ENCODE measurements at regions of chr5 and their contacts with region 1.

Region 1: DNA sequence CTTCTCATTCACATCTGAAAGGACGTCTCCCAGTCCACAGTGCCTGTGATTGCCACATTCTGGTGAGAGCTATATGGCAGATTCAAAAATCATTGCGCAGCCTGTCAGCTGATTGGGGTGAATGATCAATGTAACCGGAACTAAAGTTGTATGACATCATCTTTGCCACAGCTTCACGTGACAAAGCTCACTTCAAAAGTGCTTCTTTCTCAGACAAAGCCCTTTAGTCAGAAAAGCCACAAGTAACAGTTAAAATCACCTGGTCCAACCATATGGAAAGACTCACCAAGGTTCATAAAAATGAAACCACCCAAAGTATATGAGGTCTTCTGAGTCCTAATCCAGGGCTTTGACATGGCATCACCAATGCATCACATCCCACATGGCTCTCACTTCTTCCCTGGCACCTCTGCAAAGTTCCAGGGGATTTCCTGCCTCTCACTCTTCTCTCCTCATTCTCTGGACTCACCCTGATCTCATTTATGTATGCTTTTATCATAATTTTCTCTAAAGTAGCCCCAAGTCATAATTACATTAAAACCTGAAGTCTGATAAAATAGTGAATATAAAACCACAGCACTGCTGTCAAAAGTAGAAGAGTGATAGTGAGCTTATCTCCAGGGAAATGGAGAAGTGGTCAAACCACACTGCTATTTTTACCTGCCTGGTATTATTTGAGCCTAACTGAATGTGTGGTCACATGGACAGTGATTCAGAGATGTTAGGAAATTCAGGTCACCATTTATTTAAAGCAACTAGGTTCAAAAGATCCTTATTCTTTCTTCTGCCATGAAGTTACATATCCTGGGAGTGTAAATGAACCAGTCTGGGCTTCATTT is 193.1 kb upstream of the PTGER4 start:
- DNase-seq: peak in 8 of 9 donors; percentile 31 to 76 (median 56)
- ATAC-seq: peak; percentile 81
- H3K4me3 ChIP-seq: no peak overlapping the region
- H3K4me3 Mint-ChIP-seq: peak overlapping the region in 4 of 10 donors; percentile 2 to 52 (median 48)
- H3K27ac ChIP-seq: no peak overlapping the region
- H3K27ac Mint-ChIP-seq: peak overlapping the region in 8 of 9 donors; percentile 5 to 87 (median 59)
- H3K4me1 ChIP-seq: peaks cover 6 to 12% of the 10 kb centered on the region in 2 donors
- H3K4me1 Mint-ChIP-seq: peaks cover 6 to 69% (median 30%) of the 10 kb centered on the region in 7 donors
- H3K27me3 ChIP-seq: no peaks in the 10 kb centered on the region
- H3K27me3 Mint-ChIP-seq: no peaks in the 10 kb centered on the region

Region 2: GRCh38 chr5:40223884-40224402 is 262.7 kb before region 1 on chr5:
- CTCF ChIA-PET with region 1: no interaction called
- POLR2A ChIA-PET with region 1: no interaction called
- intact Hi-C with region 1: loop called in 1 of 2 experiments (anchors 5 kb)
- DNase-seq: peak in 1 of 9 donors; percentile 34
- ATAC-seq: peak; percentile 40
- H3K4me3 ChIP-seq: no peak overlapping the region
- H3K4me3 Mint-ChIP-seq: peak overlapping the region in 1 of 10 donors; percentile 70
- H3K27ac ChIP-seq: no peak overlapping the region
- H3K27ac Mint-ChIP-seq: peak overlapping the region in 1 of 9 donors; percentile 79
- H3K4me1 ChIP-seq: peaks cover 0 to 4% of the 10 kb centered on the region in 2 donors
- H3K4me1 Mint-ChIP-seq: peaks cover 0 to 36% (median 6%) of the 10 kb centered on the region in 7 donors
- H3K27me3 ChIP-seq: no peaks in the 10 kb centered on the region
- H3K27me3 Mint-ChIP-seq: peaks cover 0 to 5% (median 0%) of the 10 kb centered on the region in 5 donors

Region 3: GRCh38 chr5:40277161-40277906 is 209.3 kb before region 1 on chr5:
- CTCF ChIA-PET with region 1: no interaction called
- POLR2A ChIA-PET with region 1: no interaction called
- intact Hi-C with region 1: loop called in 1 of 2 experiments (anchors 2 kb)
- DNase-seq: peak in 2 of 9 donors; percentile 6 to 34
- ATAC-seq: peak; percentile 72
- H3K4me3 ChIP-seq: no peak overlapping the region
- H3K4me3 Mint-ChIP-seq: peak overlapping the region in 9 of 10 donors; percentile 7 to 72 (median 42)
- H3K27ac ChIP-seq: peak overlapping the region; percentile 45
- H3K27ac Mint-ChIP-seq: peak overlapping the region; percentile 66 to 88 (median 76)
- H3K4me1 ChIP-seq: peaks cover 9 to 16% of the 10 kb centered on the region in 2 donors
- H3K4me1 Mint-ChIP-seq: peaks cover 18 to 39% (median 33%) of the 10 kb centered on the region in 7 donors
- H3K27me3 ChIP-seq: no peaks in the 10 kb centered on the region
- H3K27me3 Mint-ChIP-seq: no peaks in the 10 kb centered on the region

Region 4: DNA sequence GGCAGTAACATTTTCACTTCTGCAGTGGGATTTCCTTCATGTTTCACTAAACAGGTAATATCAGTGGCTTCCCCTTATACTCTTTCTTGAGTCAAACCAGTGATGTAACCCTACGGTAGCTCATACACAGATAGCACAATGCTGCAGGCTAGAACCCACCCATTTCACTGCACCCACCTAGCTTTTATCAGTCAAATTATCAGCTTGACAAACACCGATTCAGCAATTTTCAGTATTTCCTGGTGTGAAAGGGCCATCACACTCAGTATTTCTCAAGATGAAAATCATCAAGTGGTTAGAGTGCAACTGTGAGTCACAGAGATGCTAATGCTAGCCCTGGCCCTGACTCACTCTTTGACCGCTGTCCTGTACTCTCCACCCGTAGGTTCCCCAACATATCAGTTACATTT is 49.2 kb before region 1 on chr5:
- CTCF ChIA-PET with region 1: no interaction called
- POLR2A ChIA-PET with region 1: no interaction called
- intact Hi-C with region 1: loop called (anchors 1 to 5 kb)
- DNase-seq: peak in 1 of 9 donors; percentile 7
- ATAC-seq: peak; percentile 67
- H3K4me3 ChIP-seq: peak overlapping the region; percentile 24
- H3K4me3 Mint-ChIP-seq: peak overlapping the region in 6 of 10 donors; percentile 10 to 75 (median 38)
- H3K27ac ChIP-seq: peak overlapping the region; percentile 79
- H3K27ac Mint-ChIP-seq: peak overlapping the region; percentile 71 to 96 (median 91)
- H3K4me1 ChIP-seq: peaks cover 34 to 39% of the 10 kb centered on the region in 2 donors
- H3K4me1 Mint-ChIP-seq: peaks cover 23 to 82% (median 68%) of the 10 kb centered on the region in 7 donors
- H3K27me3 ChIP-seq: no peaks in the 10 kb centered on the region
- H3K27me3 Mint-ChIP-seq: no peaks in the 10 kb centered on the region

Region 5: DNA sequence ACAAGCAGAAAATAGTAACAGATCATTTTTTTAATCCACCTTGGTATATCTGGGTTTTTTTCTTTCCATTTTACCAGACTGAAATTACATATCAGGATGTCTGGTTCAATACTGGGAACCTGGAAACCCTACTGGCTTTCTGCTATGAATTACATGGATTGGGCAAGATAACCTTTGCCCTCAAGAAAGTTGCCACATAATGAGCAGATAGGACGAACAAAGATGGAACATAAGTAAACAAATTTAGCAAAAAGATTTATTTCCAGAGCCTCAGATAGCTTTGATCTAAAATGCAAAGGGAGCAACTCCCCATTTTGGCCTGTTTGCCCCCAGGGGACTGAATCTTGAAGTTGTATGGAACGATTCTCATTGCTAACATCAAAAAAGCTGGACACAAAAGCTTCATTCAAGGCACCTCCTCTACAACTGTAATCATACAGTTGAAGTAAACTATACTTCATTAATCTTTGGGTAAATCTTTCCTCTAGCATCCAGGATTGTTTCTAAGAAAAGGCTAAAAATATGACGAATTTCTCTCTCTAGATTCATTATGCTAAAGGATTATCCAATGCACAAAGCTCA is 61.4 kb after region 1 on chr5:
- CTCF ChIA-PET with region 1: no interaction called
- POLR2A ChIA-PET with region 1: no interaction called
- intact Hi-C with region 1: loop called in 1 of 2 experiments (anchors 10 kb)
- DNase-seq: no peak
- ATAC-seq: no peak
- H3K4me3 ChIP-seq: no peak overlapping the region
- H3K4me3 Mint-ChIP-seq: no peak overlapping the region
- H3K27ac ChIP-seq: no peak overlapping the region
- H3K27ac Mint-ChIP-seq: no peak overlapping the region
- H3K4me1 ChIP-seq: no peaks in the 10 kb centered on the region
- H3K4me1 Mint-ChIP-seq: no peaks in the 10 kb centered on the region
- H3K27me3 ChIP-seq: no peaks in the 10 kb centered on the region
- H3K27me3 Mint-ChIP-seq: no peaks in the 10 kb centered on the region

Region 6: DNA sequence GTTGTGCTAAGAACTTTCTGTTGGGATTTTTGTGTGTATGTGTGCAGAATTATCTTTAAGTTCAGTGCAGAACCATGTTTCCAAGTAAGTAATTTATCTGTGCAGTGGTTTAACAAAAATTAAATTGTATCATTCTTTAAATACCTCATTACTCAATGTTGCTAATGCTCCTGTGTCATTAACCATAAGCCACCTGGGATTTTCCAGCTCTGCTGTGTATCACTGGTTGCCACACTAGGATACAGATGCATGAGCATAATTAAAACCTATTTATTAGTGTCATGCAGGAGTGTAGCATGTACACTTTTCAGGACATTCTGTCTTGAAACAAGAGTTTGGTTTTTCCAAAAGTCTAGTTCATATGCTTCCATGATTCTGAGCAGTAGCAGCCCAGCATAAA is 72.7 kb after region 1 on chr5:
- CTCF ChIA-PET with region 1: no interaction called
- POLR2A ChIA-PET with region 1: no interaction called
- intact Hi-C with region 1: no loop called
- DNase-seq: no peak
- ATAC-seq: no peak
- H3K4me3 ChIP-seq: no peak overlapping the region
- H3K4me3 Mint-ChIP-seq: no peak overlapping the region
- H3K27ac ChIP-seq: no peak overlapping the region
- H3K27ac Mint-ChIP-seq: no peak overlapping the region
- H3K4me1 ChIP-seq: no peaks in the 10 kb centered on the region
- H3K4me1 Mint-ChIP-seq: peaks cover 0 to 3% (median 0%) of the 10 kb centered on the region in 7 donors
- H3K27me3 ChIP-seq: no peaks in the 10 kb centered on the region
- H3K27me3 Mint-ChIP-seq: no peaks in the 10 kb centered on the region

Region 7: DNA sequence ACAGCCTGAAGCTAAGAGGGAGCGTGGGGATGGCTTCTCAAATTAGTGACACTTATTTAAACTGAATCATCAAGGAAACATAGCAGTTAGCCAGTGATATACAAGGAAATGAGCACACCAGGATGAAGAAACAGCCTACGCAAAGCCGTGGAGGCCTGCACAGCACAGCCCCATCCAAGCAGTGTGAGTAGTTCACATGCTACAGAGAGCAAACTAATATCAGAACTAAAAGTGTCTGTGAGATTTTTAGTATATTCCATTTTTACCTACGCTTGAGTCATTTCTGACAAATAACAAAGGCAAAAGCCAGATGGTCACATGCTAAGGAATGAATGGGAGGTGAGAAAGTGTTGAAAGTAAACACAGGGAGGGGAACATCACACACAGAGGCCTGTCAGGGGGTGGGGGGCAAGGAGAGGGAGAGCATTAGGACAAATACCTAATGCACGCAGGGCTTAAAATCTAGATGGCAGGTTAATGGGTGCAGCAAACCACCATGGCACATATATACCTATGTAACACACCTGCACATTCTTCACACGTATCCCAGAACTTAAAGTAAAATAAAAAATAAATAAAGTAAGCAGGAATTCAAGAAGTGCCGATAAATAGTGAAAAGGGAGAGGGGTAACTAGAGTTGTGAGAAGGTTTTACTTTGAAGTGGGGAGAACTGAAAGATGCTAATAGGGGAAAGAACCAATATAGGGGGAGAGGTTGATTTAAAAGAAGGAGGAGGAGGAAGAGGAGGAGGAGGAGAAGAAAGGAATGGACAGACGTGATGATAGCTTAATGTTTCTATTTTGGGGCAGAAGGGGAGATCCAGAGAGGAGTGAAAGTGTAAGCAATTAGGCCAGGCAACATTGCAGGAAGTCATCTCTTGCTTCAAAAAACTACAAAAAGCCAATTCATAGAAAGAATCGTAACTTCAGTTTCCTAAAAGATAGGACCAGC is 92.1 kb after region 1 on chr5:
- CTCF ChIA-PET with region 1: no interaction called
- POLR2A ChIA-PET with region 1: no interaction called
- intact Hi-C with region 1: loop called in 1 of 2 experiments (anchors 5 kb)
- DNase-seq: peak in 4 of 9 donors; percentile 7 to 45 (median 8)
- ATAC-seq: peak; percentile 45
- H3K4me3 ChIP-seq: no peak overlapping the region
- H3K4me3 Mint-ChIP-seq: peak overlapping the region in 9 of 10 donors; percentile 61 to 83 (median 79)
- H3K27ac ChIP-seq: peak overlapping the region; percentile 11
- H3K27ac Mint-ChIP-seq: peak overlapping the region; percentile 6 to 85 (median 73)
- H3K4me1 ChIP-seq: no peaks in the 10 kb centered on the region
- H3K4me1 Mint-ChIP-seq: peaks cover 14 to 35% (median 24%) of the 10 kb centered on the region in 7 donors
- H3K27me3 ChIP-seq: no peaks in the 10 kb centered on the region
- H3K27me3 Mint-ChIP-seq: no peaks in the 10 kb centered on the region

Measured in naive thymus-derived CD4-positive, alpha-beta T cell (primary cell).